ENCODE measurements at regions of chr4 and their contacts with region 1.

Region 1: GRCh38 chr4:16125571-16126445 is 42.0 kb upstream of the PROM1 start:
- DNase-seq: no peak
- H3K4me3 ChIP-seq: no peak overlapping the region
- H3K4me3 Mint-ChIP-seq: no peak overlapping the region
- H3K27ac Mint-ChIP-seq: no peak overlapping the region
- H3K4me1 ChIP-seq: peaks cover 27% of the 10 kb centered on the region
- H3K4me1 Mint-ChIP-seq: peaks cover 38% of the 10 kb centered on the region
- H3K27me3 ChIP-seq: no peaks in the 10 kb centered on the region
- H3K27me3 Mint-ChIP-seq: no peaks in the 10 kb centered on the region
- CTCF ChIP-seq: no peak

Region 2: GRCh38 chr4:15506464-15506863 is 619.3 kb before region 1 on chr4:
- CTCF ChIA-PET with region 1: no interaction called
- POLR2A ChIA-PET with region 1: no interaction called
- intact Hi-C with region 1: no loop called
- DNase-seq: no peak
- H3K4me3 ChIP-seq: no peak overlapping the region
- H3K4me3 Mint-ChIP-seq: no peak overlapping the region
- H3K27ac Mint-ChIP-seq: no peak overlapping the region
- H3K4me1 ChIP-seq: no peaks in the 10 kb centered on the region
- H3K4me1 Mint-ChIP-seq: no peaks in the 10 kb centered on the region
- H3K27me3 ChIP-seq: no peaks in the 10 kb centered on the region
- H3K27me3 Mint-ChIP-seq: no peaks in the 10 kb centered on the region
- CTCF ChIP-seq: no peak

Region 3: DNA sequence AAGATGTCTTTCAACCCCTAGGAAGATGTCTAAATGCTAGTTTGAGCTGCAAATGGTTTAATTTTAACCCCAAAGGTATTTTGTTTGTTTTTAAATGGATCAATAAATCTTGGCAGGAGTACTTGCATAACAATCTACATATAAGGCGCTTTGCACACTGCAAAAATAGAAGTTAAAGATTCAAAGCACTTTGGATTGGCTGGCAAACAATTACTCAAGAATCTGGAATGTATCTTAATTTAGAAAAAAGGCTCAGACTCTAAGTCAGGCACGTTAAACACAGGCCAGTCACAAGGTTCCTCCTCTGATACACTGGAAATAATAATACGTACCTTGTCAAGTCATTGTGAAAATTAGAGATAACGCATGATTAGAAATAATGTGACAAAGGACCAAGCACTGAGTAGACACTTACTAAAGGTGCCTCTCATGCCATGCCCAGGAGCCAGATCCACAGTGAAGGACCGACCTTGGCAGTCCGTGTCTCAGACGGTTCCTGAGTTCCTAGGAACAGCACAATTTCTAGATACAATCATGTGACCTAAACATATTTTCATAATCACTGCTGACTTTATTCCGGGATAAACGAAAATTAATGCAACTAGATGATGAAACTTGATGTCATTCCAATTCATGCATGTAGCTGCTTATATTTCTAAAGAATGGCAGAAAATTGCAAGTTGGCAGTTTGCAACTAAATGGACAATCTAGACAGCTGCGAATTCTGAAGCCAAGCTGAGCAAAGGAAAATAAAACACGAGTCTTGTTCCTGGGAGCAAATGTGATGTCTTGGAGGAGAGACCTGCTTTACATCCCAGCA is 91.6 kb before region 1 on chr4:
- CTCF ChIA-PET with region 1: interaction called, 6 read pairs
- POLR2A ChIA-PET with region 1: no interaction called
- intact Hi-C with region 1: loop called (anchors 1 kb)
- DNase-seq: peak; percentile 44 to 62
- H3K4me3 ChIP-seq: no peak overlapping the region
- H3K4me3 Mint-ChIP-seq: peak overlapping the region; percentile 25
- H3K27ac Mint-ChIP-seq: no peak overlapping the region
- H3K4me1 ChIP-seq: peaks cover 91% of the 10 kb centered on the region
- H3K4me1 Mint-ChIP-seq: peaks cover 42% of the 10 kb centered on the region
- H3K27me3 ChIP-seq: no peaks in the 10 kb centered on the region
- H3K27me3 Mint-ChIP-seq: no peaks in the 10 kb centered on the region
- CTCF ChIP-seq: no peak

Region 4: DNA sequence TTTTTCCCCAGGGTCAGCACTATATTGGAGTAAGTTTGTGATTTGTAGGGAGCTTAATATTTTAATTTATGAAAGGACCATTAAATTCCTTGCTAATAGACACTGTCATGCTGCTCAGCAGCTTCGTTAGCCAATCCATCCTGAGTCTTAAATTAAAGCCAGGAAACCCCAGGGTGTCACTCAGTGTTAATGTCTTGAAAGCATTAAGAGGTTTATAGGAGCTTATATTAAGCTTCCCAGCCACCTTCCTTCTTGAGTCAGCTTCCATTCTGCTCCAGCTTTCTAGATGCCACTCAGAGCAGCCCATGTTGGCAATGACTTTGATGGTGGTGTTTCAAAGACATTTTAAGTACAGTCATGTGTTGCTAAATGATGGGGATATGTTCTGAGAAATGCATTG is 14.9 kb before region 1 on chr4:
- CTCF ChIA-PET with region 1: no interaction called
- POLR2A ChIA-PET with region 1: no interaction called
- intact Hi-C with region 1: loop called (anchors 2 kb)
- DNase-seq: no peak
- H3K4me3 ChIP-seq: no peak overlapping the region
- H3K4me3 Mint-ChIP-seq: no peak overlapping the region
- H3K27ac Mint-ChIP-seq: no peak overlapping the region
- H3K4me1 ChIP-seq: peaks cover 12% of the 10 kb centered on the region
- H3K4me1 Mint-ChIP-seq: peaks cover 7% of the 10 kb centered on the region
- H3K27me3 ChIP-seq: no peaks in the 10 kb centered on the region
- H3K27me3 Mint-ChIP-seq: no peaks in the 10 kb centered on the region
- CTCF ChIP-seq: no peak

Region 5: GRCh38 chr4:16140520-16141249 is 14.9 kb after region 1 on chr4:
- CTCF ChIA-PET with region 1: no interaction called
- POLR2A ChIA-PET with region 1: no interaction called
- intact Hi-C with region 1: no loop called
- DNase-seq: peak; percentile 14 to 46
- H3K4me3 ChIP-seq: no peak overlapping the region
- H3K4me3 Mint-ChIP-seq: no peak overlapping the region
- H3K27ac Mint-ChIP-seq: no peak overlapping the region
- H3K4me1 ChIP-seq: no peaks in the 10 kb centered on the region
- H3K4me1 Mint-ChIP-seq: no peaks in the 10 kb centered on the region
- H3K27me3 ChIP-seq: no peaks in the 10 kb centered on the region
- H3K27me3 Mint-ChIP-seq: no peaks in the 10 kb centered on the region
- CTCF ChIP-seq: no peak

Region 6: GRCh38 chr4:16196478-16197393 is 70.9 kb after region 1 on chr4:
- CTCF ChIA-PET with region 1: interaction called, 7 read pairs
- POLR2A ChIA-PET with region 1: no interaction called
- intact Hi-C with region 1: loop called (anchors 5 kb)
- DNase-seq: peak in 1 of 2 experiments; percentile 67
- H3K4me3 ChIP-seq: no peak overlapping the region
- H3K4me3 Mint-ChIP-seq: peak overlapping the region; percentile 52
- H3K27ac Mint-ChIP-seq: peak overlapping the region; percentile 83
- H3K4me1 ChIP-seq: no peaks in the 10 kb centered on the region; the same call in 1 of the 2 replicates
- H3K4me1 Mint-ChIP-seq: peaks cover 14% of the 10 kb centered on the region
- H3K27me3 ChIP-seq: no peaks in the 10 kb centered on the region
- H3K27me3 Mint-ChIP-seq: no peaks in the 10 kb centered on the region
- CTCF ChIP-seq: peak in 1 of 2 experiments; percentile 41

Measured in Caco-2 (cell line).